Aorta (tissue), 5 donors: ENCODE measurements at regions of chr6 and their contacts with region 1.

Region 1: DNA sequence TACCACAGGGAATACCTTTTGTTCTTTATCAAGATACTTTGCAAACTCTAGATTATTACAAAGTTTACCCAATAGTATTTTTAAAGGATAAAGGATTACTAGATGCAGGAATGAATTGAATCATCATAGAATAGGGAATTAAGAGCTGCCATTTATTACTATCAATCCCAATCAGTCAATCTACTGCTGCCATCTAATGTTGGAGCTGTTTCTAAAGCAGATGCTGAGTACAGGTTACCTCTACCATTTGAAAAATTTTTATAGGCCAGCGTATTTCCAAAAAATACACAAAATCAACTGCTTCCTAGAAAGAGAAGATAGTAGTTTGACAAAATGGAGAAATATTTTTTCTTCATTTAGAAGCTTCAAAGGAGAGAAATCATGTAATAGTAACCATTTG is 520.4 kb downstream of the ADGRB3 start:
- DNase-seq: no peak
- ATAC-seq: no peak
- H3K4me3 ChIP-seq: no peak overlapping the region
- H3K27ac ChIP-seq: no peak overlapping the region
- H3K4me1 ChIP-seq: no peaks in the 10 kb centered on the region
- H3K27me3 ChIP-seq: no peaks in the 10 kb centered on the region

Region 2: GRCh38 chr6:69005199-69005598 is 150.3 kb before region 1 on chr6:
- intact Hi-C with region 1: loop called in 1 of 2 experiments (anchors 10 kb)
- DNase-seq: no peak
- ATAC-seq: no peak
- H3K4me3 ChIP-seq: no peak overlapping the region
- H3K27ac ChIP-seq: no peak overlapping the region
- H3K4me1 ChIP-seq: no peaks in the 10 kb centered on the region
- H3K27me3 ChIP-seq: no peaks in the 10 kb centered on the region

Region 3: DNA sequence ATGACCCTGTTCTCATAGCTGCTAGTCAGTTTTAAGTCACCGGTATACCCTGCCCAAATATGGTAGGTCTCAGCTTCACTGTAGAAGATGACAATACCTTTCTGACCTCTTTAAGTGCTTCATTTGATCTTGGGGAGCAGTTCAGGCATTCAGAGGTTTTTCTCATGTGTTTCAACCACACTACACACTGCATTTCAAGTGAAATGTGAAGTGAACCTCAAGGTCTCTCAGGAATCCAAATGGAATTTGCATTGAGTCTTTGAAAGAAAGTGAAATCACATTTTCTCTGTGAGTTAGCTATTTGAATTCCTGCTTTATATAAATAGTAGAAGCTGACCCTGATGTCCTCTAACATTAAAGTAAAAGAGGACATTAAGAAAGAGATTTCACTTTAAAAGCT is 58.8 kb before region 1 on chr6:
- intact Hi-C with region 1: no loop called
- DNase-seq: no peak
- ATAC-seq: no peak
- H3K4me3 ChIP-seq: no peak overlapping the region
- H3K27ac ChIP-seq: no peak overlapping the region
- H3K4me1 ChIP-seq: peaks cover 0 to 2% of the 10 kb centered on the region in 2 donors
- H3K27me3 ChIP-seq: no peaks in the 10 kb centered on the region

Region 4: GRCh38 chr6:69220375-69220774 is 64.9 kb after region 1 on chr6:
- intact Hi-C with region 1: no loop called
- DNase-seq: no peak
- ATAC-seq: no peak
- H3K4me3 ChIP-seq: no peak overlapping the region
- H3K27ac ChIP-seq: no peak overlapping the region
- H3K4me1 ChIP-seq: no peaks in the 10 kb centered on the region
- H3K27me3 ChIP-seq: no peaks in the 10 kb centered on the region

Region 5: GRCh38 chr6:69390125-69390524 is 234.7 kb after region 1 on chr6:
- intact Hi-C with region 1: no loop called
- DNase-seq: no peak
- ATAC-seq: no peak
- H3K4me3 ChIP-seq: no peak overlapping the region
- H3K27ac ChIP-seq: no peak overlapping the region
- H3K4me1 ChIP-seq: no peaks in the 10 kb centered on the region
- H3K27me3 ChIP-seq: no peaks in the 10 kb centered on the region